Activated B cell treated with CpG ODN at 0.5 μM for 24 hours (primary cell): ENCODE measurements at regions of chr10 and their contacts with region 1.

Region 1: DNA sequence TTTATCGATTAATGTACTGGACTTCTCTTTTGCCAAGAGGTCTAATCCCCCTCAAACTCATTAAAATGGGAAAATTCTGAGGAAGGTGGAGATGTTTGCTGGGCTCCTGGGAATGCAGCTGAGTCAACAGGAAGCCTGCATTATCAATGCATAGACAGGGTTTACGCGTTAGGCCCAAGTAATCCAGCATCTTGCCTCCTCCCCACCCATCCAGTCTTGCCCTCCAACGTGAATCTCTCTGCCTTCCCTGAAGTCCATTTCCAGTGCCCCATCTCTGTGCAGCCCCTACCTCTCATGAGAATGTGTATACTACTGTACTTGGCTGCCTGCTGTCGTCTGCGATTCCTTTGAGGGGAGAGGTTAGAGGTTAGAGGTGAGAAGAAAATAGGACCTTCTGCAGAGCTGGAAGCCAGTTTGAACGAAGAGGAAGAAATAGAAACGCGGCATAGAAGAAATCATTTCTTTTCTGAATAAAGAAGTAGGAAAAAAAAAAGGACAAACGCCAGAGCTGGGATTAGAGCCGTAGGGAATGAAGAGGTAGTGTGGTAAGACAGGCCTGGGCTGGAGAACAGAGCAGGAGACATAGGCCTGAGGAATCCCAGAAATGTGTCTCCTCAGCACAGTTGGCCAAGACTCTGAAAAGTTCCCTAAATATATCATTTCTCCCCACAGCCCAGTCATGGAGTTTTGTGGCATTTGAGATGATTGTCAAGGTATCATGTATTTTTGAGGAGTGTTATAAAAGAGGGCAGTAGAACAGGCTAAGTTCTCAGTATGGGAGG is 75.6 kb downstream of the MYOF start:
- DNase-seq: no peak
- ATAC-seq: no peak
- H3K4me3 Mint-ChIP-seq: no peak overlapping the region
- H3K27ac Mint-ChIP-seq: no peak overlapping the region
- H3K4me1 Mint-ChIP-seq: peaks cover 2% of the 10 kb centered on the region
- H3K27me3 Mint-ChIP-seq: peaks cover 2% of the 10 kb centered on the region
- CTCF ChIP-seq: no peak

Region 2: DNA sequence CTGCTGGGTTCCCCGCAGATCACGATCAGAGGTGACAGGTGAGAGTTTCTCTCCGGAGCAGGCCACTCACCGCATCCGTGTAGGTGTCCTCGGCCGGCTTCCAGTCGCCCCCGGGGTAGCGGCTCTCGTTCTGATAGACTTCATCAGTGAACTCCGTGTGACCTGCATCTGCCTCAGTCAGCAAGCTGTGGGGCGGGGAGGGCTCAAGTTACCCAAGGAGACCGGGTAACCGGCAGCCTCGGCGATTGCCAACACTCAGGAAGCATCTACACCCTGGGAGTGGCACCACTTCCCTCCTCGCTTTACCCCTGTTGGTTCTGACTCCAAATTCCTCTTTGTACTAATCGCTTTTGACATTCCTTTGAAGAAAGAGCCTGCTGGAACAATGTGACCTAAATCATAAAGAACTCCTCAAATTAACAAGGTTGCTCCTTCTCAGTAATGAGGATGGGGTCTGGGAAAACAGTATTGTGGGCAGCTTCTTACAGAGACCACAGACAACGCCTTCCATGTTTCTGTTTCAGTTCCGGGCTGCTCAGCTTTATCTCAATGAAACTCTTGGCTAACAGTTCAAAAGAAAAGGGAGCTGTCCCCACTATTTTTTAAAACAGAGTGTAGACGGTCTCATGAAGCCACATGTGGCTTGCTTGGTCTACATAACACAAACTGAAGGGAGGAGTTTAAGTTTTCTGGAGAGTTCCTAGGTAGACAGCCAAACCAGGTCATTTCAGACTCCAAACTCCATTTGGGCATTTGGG is 42.5 kb before region 1 on chr10:
- CTCF ChIA-PET with region 1: no interaction called
- POLR2A ChIA-PET with region 1: no interaction called
- intact Hi-C with region 1: loop called (anchors 1 kb)
- DNase-seq: no peak
- ATAC-seq: no peak
- H3K4me3 Mint-ChIP-seq: no peak overlapping the region
- H3K27ac Mint-ChIP-seq: no peak overlapping the region
- H3K4me1 Mint-ChIP-seq: no peaks in the 10 kb centered on the region
- H3K27me3 Mint-ChIP-seq: peaks cover 2% of the 10 kb centered on the region
- CTCF ChIP-seq: no peak